ENCODE measurements at regions of chr1 and their contacts with region 1.

Region 1: DNA sequence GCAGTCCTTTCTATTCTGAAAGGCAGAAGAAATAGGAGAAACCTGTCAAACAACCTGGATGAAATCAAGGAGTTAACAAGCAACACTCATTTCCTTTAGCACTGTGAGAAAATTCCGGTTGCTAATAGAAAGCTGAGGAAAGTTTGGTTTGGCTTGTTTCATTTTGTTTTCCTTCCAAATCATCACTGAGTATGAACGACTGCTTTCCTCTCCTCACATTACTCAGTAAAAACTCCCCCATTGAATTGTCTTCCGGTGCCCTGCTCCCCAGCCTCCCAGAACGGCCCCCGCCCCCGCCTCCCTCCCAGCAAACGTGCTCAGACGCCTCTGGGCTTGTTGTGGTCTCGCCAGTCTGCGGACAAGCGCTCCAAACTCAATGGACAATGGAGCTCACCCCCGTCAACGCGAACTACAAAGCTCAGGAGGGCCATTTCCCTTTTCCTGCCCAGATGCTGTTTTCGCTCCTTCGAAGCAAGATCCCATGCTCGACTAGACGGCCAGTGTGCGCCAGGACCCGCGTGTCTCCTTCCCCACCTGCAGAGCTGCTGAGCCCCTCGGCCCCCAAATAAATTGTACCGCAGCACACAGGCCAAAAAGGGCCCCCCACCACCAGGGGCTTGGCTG is 747 bp downstream of the STX6 start:
- DNase-seq: no peak
- ATAC-seq: peak; percentile 42
- H3K4me3 ChIP-seq: peak overlapping the region; percentile 79 to 94
- H3K27ac ChIP-seq: peak overlapping the region; percentile 83
- H3K4me1 ChIP-seq: peaks cover 18% of the 10 kb centered on the region
- H3K27me3 ChIP-seq: no peaks in the 10 kb centered on the region
- CTCF ChIP-seq: no peak

Region 2: DNA sequence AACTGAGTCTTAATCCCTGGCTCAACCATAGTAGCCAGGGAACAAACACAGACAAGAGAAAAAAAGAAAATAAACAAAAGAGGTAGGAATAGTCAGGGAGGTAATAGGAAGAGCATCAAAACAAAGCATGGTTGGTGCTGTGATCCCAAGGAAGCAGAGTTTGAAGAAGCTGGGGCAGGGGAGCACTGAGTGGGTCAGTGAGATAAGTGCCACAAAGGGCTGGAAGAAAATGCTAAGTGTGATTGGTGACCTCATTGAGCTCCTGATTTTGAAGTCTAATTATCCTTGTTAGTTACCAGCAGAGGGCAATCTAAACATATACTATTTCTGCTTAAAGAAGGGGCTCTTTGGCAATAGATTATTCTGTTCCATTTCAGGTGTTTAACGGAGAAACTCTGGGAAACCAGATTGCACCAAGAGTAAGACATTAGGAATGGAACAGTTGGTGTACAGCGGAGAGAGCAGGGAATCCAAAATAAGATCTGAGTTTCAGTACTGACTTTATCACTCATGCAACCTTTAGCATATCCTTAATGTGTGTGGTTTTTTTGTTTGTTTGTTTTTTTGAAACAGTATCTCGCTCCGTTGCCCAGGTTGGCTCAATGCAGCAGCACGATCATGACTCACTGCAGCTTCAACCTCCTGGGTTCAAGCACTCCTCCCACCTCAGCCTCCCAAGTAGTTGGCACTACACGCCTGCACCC is 140.0 kb before region 1 on chr1:
- CTCF ChIA-PET with region 1: interaction called, 17 read pairs
- POLR2A ChIA-PET with region 1: no interaction called
- in situ Hi-C with region 1: no loop called
- intact Hi-C with region 1: no loop called
- DNase-seq: peak; percentile 20
- ATAC-seq: peak; percentile 79
- H3K4me3 ChIP-seq: no peak overlapping the region
- H3K27ac ChIP-seq: no peak overlapping the region
- H3K4me1 ChIP-seq: no peaks in the 10 kb centered on the region
- H3K27me3 ChIP-seq: no peaks in the 10 kb centered on the region
- CTCF ChIP-seq: peak; percentile 69

Region 3: DNA sequence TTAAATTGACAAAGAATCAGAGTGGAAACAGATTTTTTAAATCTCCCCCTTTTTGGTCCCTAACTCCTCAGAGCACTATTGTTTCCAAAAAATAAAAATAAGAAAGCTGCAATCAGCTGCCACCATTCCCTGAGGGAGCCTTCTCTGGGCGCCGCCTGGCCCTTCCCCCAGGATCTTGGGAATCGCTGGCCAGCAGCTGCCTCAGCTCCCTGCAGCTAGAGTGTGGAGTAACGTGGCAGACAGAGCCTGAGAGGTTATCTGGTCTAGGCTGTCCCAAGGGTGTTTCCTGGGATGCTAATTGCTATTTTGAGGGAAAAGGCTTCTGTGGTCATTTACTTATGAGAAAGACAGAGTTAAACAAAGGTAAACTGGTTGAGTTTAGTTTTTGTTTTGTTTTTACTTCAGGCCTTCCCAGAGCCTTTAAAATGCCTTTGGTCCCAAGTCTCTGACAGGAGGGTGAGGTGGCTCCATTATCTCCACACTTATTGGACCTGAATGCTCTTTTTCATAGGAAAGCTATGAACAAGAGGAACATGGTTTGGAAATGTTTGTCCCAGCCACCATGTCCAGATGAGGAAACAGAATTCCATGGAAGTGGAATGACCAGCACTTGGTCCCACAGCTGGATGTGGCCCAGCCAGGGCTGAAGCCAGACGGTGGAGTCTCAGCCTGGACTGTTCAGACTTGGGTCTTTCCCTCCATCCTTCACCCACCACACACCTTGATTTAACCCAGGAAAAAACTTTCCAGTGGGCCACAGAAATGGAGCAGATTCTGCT is 123.3 kb before region 1 on chr1:
- CTCF ChIA-PET with region 1: interaction called, 10 read pairs
- POLR2A ChIA-PET with region 1: no interaction called
- in situ Hi-C with region 1: no loop called
- intact Hi-C with region 1: no loop called
- DNase-seq: no peak
- ATAC-seq: no peak
- H3K4me3 ChIP-seq: no peak overlapping the region
- H3K27ac ChIP-seq: no peak overlapping the region
- H3K4me1 ChIP-seq: no peaks in the 10 kb centered on the region
- H3K27me3 ChIP-seq: no peaks in the 10 kb centered on the region
- CTCF ChIP-seq: no peak

Region 4: GRCh38 chr1:180975551-180975950 is 46.4 kb before region 1 on chr1:
- CTCF ChIA-PET with region 1: no interaction called
- POLR2A ChIA-PET with region 1: interaction called, 13 read pairs
- in situ Hi-C with region 1: no loop called
- intact Hi-C with region 1: no loop called
- DNase-seq: no peak
- ATAC-seq: no peak
- H3K4me3 ChIP-seq: no peak overlapping the region
- H3K27ac ChIP-seq: no peak overlapping the region
- H3K4me1 ChIP-seq: no peaks in the 10 kb centered on the region
- H3K27me3 ChIP-seq: no peaks in the 10 kb centered on the region
- CTCF ChIP-seq: no peak

Region 5: GRCh38 chr1:181482521-181483284 is 460.8 kb after region 1 on chr1:
- CTCF ChIA-PET with region 1: no interaction called
- POLR2A ChIA-PET with region 1: no interaction called
- in situ Hi-C with region 1: no loop called
- intact Hi-C with region 1: no loop called
- DNase-seq: no peak
- ATAC-seq: peak; percentile 75
- H3K4me3 ChIP-seq: peak overlapping the region; percentile 12 to 22
- H3K27ac ChIP-seq: no peak overlapping the region
- H3K4me1 ChIP-seq: peaks cover 4% of the 10 kb centered on the region
- H3K27me3 ChIP-seq: peaks cover 39% of the 10 kb centered on the region
- CTCF ChIP-seq: no peak

Region 6: GRCh38 chr1:182129398-182129797 is 1107.5 kb after region 1 on chr1:
- CTCF ChIA-PET with region 1: no interaction called
- POLR2A ChIA-PET with region 1: no interaction called
- in situ Hi-C with region 1: no loop called
- intact Hi-C with region 1: no loop called
- DNase-seq: no peak
- ATAC-seq: no peak
- H3K4me3 ChIP-seq: no peak overlapping the region
- H3K27ac ChIP-seq: no peak overlapping the region
- H3K4me1 ChIP-seq: no peaks in the 10 kb centered on the region
- H3K27me3 ChIP-seq: no peaks in the 10 kb centered on the region
- CTCF ChIP-seq: no peak